ENCODE measurements at regions of chr3 and their contacts with region 1.

Region 1: DNA sequence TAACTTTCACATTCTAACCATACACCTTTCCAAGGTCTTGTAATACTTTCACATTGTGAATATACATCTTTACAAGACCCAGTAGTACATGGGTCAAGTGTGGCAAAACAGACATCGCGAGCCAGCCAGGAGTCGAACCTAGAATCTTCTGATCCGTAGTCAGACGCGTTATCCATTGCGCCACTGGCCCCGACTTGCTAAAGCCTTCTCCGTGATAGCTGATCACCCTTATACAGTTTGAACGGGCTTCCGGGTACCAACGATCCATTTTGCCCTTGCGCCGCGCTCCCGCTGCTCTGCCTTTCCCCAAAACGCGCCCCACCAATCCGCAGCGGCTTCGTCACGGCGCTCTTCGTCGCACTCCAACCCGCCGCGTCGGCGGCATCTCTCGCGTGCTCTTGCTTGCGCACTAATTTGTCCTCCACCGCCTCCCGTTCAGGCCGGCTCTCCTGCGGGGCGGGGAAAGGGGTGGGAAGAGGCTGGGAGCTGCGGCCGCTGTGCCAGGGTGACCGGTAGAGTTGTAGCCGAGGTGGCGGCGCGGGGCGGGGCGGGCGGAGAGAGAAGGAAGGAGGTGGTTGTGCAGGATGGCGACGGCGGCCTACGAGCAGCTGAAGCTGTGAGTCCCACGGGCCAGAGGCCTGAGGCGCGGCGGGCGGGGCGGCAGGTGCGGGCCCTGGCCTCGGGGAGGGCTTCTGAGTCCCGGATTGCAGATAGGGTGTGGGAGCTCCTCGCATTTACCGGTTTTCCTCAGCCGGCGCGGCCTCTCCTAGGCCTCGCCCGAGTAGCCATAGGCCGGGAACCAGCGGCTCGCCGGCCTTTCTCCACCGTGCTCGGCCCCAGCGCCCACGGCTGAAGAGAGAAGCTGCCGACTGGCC is at the start of gene SACM1L:
- DNase-seq: peak; percentile 99
- H3K4me3 ChIP-seq: peak within 1 kb of the TSS; percentile 91
- H3K27ac ChIP-seq: peak within 1 kb of the TSS; percentile 78
- H3K4me1 ChIP-seq: peaks cover 34% of the 10 kb centered on the region
- CTCF ChIP-seq: no peak
- total RNA-seq, gene SACM1L: 35.5 and 35.9 TPM in 2 replicates

Region 2: GRCh38 chr3:45387636-45388348 is 301.3 kb before region 1 on chr3:
- CTCF ChIA-PET with region 1: no interaction called
- POLR2A ChIA-PET with region 1: no interaction called
- intact Hi-C with region 1: loop called (anchors 1 kb)
- DNase-seq: no peak
- H3K4me3 ChIP-seq: peak overlapping the region; percentile 81
- H3K27ac ChIP-seq: peak overlapping the region; percentile 58
- H3K4me1 ChIP-seq: peaks cover 14% of the 10 kb centered on the region
- CTCF ChIP-seq: no peak

Region 3: GRCh38 chr3:45579251-45579650 is 109.9 kb before region 1 on chr3:
- CTCF ChIA-PET with region 1: no interaction called
- POLR2A ChIA-PET with region 1: no interaction called
- intact Hi-C with region 1: no loop called
- DNase-seq: no peak
- H3K4me3 ChIP-seq: no peak overlapping the region
- H3K27ac ChIP-seq: no peak overlapping the region
- H3K4me1 ChIP-seq: no peaks in the 10 kb centered on the region
- CTCF ChIP-seq: no peak

Region 4: GRCh38 chr3:45701172-45701867 is 12.2 kb after region 1 on chr3:
- CTCF ChIA-PET with region 1: no interaction called
- POLR2A ChIA-PET with region 1: interaction called, 12 read pairs
- intact Hi-C with region 1: no loop called
- DNase-seq: no peak
- H3K4me3 ChIP-seq: no peak overlapping the region
- H3K27ac ChIP-seq: no peak overlapping the region
- H3K4me1 ChIP-seq: no peaks in the 10 kb centered on the region
- CTCF ChIP-seq: no peak

Measured in OCI-LY7 (cell line).